CD14-positive monocyte (primary cell): ENCODE measurements at regions of chr4 and their contacts with region 1.

Region 1: GRCh38 chr4:15649914-15650545 is 5.1 kb downstream of the FBXL5 start:
- DNase-seq: peak; percentile 39 to 65 (median 63)
- H3K4me3 ChIP-seq: peak overlapping the region in 2 of 3 experiments; percentile 36 to 98
- H3K4me3 Mint-ChIP-seq: peak overlapping the region; percentile 55 to 73
- H3K27ac ChIP-seq: peak overlapping the region in 1 of 2 donors; percentile 97
- H3K27ac Mint-ChIP-seq: peak overlapping the region; percentile 78 to 97 (median 87)
- H3K4me1 ChIP-seq: peaks cover 44 to 82% of the 10 kb centered on the region in 2 donors
- H3K4me1 Mint-ChIP-seq: peaks cover 66% of the 10 kb centered on the region
- H3K27me3 ChIP-seq: no peaks in the 10 kb centered on the region
- H3K27me3 Mint-ChIP-seq: no peaks in the 10 kb centered on the region
- CTCF ChIP-seq: peak; percentile 83

Region 2: DNA sequence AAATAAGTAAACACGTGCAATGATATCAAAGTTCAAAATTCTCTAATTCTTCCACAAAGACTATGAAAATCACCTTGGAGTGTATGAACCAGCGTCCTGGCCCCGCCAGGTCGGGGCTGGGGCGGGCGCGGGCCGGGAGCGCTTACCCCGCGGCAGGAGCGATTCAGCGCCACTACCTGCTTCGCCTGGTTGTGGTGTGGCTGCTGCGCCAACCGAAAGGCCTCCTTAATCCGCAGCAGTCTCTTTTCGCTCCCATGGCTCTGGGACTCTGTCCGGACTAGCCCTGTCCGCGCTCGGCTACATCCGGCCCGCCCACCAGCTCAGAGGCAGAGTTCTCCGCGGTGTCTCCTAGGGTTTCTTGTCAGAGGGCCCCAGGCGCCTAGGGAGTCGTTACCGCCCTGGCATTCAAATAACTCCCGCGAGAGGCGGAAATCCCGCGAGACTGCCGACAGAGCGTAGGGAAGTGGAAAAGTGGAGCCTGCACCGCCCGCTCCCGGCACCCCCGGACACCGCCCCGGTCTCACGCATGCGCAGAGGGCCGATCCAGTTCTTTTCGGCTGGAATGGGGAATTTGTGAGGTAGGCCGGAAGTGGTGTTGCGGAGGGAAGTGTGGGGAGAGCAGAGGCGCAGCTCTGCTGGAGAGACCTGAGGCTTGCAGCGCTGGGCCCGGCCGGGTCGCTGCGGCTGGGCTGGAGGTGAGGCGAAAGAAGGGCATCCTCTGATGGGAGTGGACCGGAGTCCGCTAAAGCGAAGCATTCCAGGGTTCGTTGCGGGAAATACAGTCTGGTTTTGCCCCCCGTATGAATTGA is 31.4 kb after region 1 on chr4 and contains the start of gene FAM200B:
- intact Hi-C with region 1: loop called in 1 of 2 experiments (anchors 5 kb)
- DNase-seq: peak; percentile 94 to 95 (median 94)
- H3K4me3 ChIP-seq: peak within 1 kb of the TSS; percentile 61 to 96 (median 91)
- H3K4me3 Mint-ChIP-seq: peak within 1 kb of the TSS; percentile 97 to 99
- H3K27ac ChIP-seq: peak within 1 kb of the TSS; percentile 90 to 93
- H3K27ac Mint-ChIP-seq: peak within 1 kb of the TSS; percentile 94 to 98 (median 96)
- H3K4me1 ChIP-seq: peaks cover 65 to 88% of the 10 kb centered on the region in 2 donors
- H3K4me1 Mint-ChIP-seq: peaks cover 68% of the 10 kb centered on the region
- H3K27me3 ChIP-seq: no peaks in the 10 kb centered on the region
- H3K27me3 Mint-ChIP-seq: no peaks in the 10 kb centered on the region
- CTCF ChIP-seq: no peak
- polyA plus RNA-seq, gene FAM200B: 65.7 to 169 (median 151) TPM

Region 3: GRCh38 chr4:15702941-15703403 is 52.9 kb after region 1 on chr4 and contains the start of gene BST1:
- intact Hi-C with region 1: loop called in 1 of 2 experiments (anchors 5 kb)
- DNase-seq: peak; percentile 93 to 96 (median 94)
- H3K4me3 ChIP-seq: peak within 1 kb of the TSS; percentile 60 to 92 (median 63)
- H3K4me3 Mint-ChIP-seq: peak within 1 kb of the TSS; percentile 87 to 97
- H3K27ac ChIP-seq: peak within 1 kb of the TSS; percentile 70 to 87
- H3K27ac Mint-ChIP-seq: peak within 1 kb of the TSS; percentile 91 to 97 (median 94)
- H3K4me1 ChIP-seq: peaks cover 68 to 81% of the 10 kb centered on the region in 2 donors
- H3K4me1 Mint-ChIP-seq: peaks cover 88% of the 10 kb centered on the region
- H3K27me3 ChIP-seq: no peaks in the 10 kb centered on the region
- H3K27me3 Mint-ChIP-seq: peaks cover 0 to 1% (median 1%) of the 10 kb centered on the region in 3 donors
- CTCF ChIP-seq: no peak
- polyA plus RNA-seq, gene BST1: 140 to 297 (median 266) TPM